ENCODE measurements at regions of chr6 and their contacts with region 1.

Region 1: GRCh38 chr6:27785294-27785693 is 126.9 kb downstream of the OR2B2 start:
- DNase-seq: peak in 1 of 2 donors; percentile 8
- H3K4me3 ChIP-seq: no peak overlapping the region
- H3K27ac ChIP-seq: no peak overlapping the region
- H3K4me1 ChIP-seq: no peaks in the 10 kb centered on the region
- H3K27me3 ChIP-seq: no peaks in the 10 kb centered on the region
- CTCF ChIP-seq: no peak
- POLR2A ChIP-seq: no peak

Region 2: DNA sequence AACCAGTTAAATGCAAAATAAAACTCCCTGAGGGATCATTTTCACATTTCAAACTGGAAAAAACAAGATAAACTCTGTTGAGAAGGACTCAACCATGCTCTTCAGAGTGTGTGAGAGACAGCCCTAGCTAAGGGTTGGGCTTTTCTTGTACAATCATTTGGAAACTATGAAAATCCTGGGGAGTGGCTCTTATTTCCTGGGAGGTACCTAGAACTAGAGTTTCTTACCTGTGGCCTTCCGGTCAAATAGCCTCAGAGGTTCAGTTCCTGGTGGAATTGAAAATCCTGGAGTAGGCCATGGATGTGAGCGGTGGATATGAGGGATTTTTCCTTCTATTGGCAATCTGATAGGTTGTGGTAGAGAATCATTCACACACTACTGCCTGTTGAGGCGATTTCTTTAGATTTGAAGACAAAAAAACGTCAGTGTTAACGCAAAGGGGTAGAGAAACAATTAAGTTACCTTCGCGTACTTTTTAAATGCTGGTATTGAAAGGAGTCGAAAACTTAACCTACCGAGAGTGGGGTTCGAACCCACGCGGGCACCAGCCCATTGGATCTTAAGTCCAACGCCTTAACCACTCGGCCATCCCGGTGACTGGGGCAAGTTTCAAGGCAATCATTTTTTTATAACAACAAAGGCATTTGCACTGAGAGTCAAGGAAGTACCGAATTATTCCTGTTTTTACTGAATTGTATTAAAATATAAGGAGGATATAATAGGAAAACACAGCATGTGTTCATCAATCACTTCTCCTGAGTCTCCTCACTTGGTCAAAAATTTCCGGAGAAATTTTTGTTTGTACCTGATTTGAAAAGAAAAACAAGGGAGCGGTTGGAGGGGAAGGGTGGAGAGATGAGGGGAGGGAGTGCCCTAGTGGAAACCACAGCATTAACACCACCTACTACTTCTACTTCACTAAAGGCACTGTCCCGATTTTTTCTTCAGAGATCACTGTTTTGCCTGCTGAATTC is 64.4 kb before region 1 on chr6:
- intact Hi-C with region 1: no loop called
- DNase-seq: no peak
- H3K4me3 ChIP-seq: no peak overlapping the region
- H3K27ac ChIP-seq: no peak overlapping the region
- H3K4me1 ChIP-seq: no peaks in the 10 kb centered on the region
- H3K27me3 ChIP-seq: peaks cover 4% of the 10 kb centered on the region
- CTCF ChIP-seq: no peak
- POLR2A ChIP-seq: no peak

Region 3: GRCh38 chr6:28764014-28764723 is 978.9 kb after region 1 on chr6:
- intact Hi-C with region 1: loop called (anchors 5 kb)
- DNase-seq: no peak
- H3K4me3 ChIP-seq: no peak overlapping the region
- H3K27ac ChIP-seq: no peak overlapping the region
- H3K4me1 ChIP-seq: no peaks in the 10 kb centered on the region
- H3K27me3 ChIP-seq: peaks cover 3% of the 10 kb centered on the region
- CTCF ChIP-seq: no peak
- POLR2A ChIP-seq: no peak